Activated T-helper 1 cell treated with anti-CD3 and anti-CD28 coated beads, Interleukin-12 subunit alpha, Interleukin-12 subunit beta, Interleukin-2, Interleukin-4 antibody, amounts not matched to agents 30 ng/mL and 10 ng/mL and 1 ng/mL, durations not matched to agents 14 hours and 24 hours and 36 hours (primary cell): ENCODE measurements at regions of chr10 and their contacts with region 1.

Region 1: DNA sequence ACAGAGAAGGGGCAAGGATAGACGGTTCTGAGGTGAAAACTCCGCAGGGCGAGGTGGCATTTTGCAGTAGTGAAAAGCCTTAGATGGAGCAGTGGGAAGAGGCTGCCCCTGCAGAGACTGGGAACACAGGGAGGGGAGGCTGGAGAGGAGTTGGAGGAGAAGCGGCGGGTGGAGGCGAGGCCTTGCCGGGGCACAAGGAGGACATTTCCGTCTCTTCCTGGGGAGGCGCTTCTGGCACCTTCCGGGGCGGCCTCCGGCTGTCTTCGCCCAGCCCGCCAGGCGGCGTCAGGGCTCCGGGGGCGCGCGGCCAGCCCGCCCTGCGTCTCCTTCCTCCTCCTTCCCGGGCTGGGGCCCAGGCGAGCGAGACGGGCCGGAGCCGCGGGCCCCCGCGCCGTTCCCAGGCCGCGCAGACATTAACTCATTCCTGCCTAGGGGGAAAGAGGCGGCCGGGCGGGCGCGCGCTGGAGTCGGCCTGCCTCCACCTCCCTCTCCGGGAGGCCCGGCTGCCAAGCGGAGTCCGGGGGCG is 42.7 kb downstream of the LDB3 start:
- DNase-seq: peak; percentile 84
- H3K4me3 Mint-ChIP-seq: peak overlapping the region; percentile 88
- H3K27ac Mint-ChIP-seq: peak overlapping the region; percentile 97
- H3K4me1 Mint-ChIP-seq: peaks cover 17% of the 10 kb centered on the region
- H3K27me3 Mint-ChIP-seq: no peaks in the 10 kb centered on the region

Region 2: GRCh38 chr10:86521678-86522509 is 189.2 kb before region 1 on chr10 and contains the start of gene WAPL:
- intact Hi-C with region 1: loop called (anchors 2 kb)
- DNase-seq: peak; percentile 95
- H3K4me3 Mint-ChIP-seq: peak within 1 kb of the TSS; percentile 99
- H3K27ac Mint-ChIP-seq: peak within 1 kb of the TSS; percentile 98
- H3K4me1 Mint-ChIP-seq: peaks cover 68% of the 10 kb centered on the region
- H3K27me3 Mint-ChIP-seq: no peaks in the 10 kb centered on the region
- total RNA-seq, gene WAPL: 49.7 and 50.2 TPM in 2 replicates

Region 3: DNA sequence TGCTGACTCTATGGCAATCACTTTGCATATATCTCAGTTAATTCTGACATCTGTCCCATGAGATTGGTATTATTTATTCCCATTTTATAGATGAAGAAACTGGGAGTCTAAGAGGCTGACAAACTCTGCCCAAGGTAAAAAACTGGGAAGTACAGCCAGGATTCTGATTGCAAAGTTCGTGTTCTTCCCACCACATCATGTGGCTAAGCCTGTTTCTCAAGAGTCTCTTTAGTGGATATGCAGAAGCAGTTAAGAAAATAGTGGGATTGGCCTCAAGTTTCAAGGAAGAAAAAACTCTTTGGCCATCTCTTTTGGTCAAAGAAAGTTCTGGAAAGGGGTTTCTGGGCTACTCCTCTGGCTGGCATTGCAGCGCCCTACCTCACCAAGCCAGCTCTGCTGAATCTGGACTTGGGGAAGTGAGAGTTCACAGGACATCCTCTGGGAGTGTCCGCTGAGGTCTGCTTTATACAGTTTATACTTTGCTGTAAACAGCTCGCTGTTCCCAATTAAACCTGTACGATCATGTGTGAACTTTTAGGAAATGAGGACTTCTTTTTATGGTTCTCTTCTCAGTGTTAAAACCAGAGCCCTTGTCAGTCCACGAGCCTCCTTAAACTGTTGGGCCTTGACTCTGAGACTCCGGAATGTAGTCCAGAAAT is 33.1 kb after region 1 on chr10:
- intact Hi-C with region 1: no loop called
- DNase-seq: no peak
- H3K4me3 Mint-ChIP-seq: no peak overlapping the region
- H3K27ac Mint-ChIP-seq: no peak overlapping the region
- H3K4me1 Mint-ChIP-seq: no peaks in the 10 kb centered on the region
- H3K27me3 Mint-ChIP-seq: peaks cover 7% of the 10 kb centered on the region

Region 4: GRCh38 chr10:86755740-86756510 is 44.9 kb after region 1 on chr10:
- intact Hi-C with region 1: loop called (anchors 1 kb)
- DNase-seq: peak; percentile 86
- H3K4me3 Mint-ChIP-seq: peak overlapping the region; percentile 86
- H3K27ac Mint-ChIP-seq: peak overlapping the region; percentile 86
- H3K4me1 Mint-ChIP-seq: peaks cover 52% of the 10 kb centered on the region
- H3K27me3 Mint-ChIP-seq: peaks cover 38% of the 10 kb centered on the region

Region 5: GRCh38 chr10:86888585-86889381 is 177.7 kb after region 1 on chr10:
- intact Hi-C with region 1: loop called (anchors 2 kb)
- DNase-seq: no peak
- H3K4me3 Mint-ChIP-seq: no peak overlapping the region
- H3K27ac Mint-ChIP-seq: peak overlapping the region; percentile 64
- H3K4me1 Mint-ChIP-seq: peaks cover 9% of the 10 kb centered on the region
- H3K27me3 Mint-ChIP-seq: no peaks in the 10 kb centered on the region

Region 6: DNA sequence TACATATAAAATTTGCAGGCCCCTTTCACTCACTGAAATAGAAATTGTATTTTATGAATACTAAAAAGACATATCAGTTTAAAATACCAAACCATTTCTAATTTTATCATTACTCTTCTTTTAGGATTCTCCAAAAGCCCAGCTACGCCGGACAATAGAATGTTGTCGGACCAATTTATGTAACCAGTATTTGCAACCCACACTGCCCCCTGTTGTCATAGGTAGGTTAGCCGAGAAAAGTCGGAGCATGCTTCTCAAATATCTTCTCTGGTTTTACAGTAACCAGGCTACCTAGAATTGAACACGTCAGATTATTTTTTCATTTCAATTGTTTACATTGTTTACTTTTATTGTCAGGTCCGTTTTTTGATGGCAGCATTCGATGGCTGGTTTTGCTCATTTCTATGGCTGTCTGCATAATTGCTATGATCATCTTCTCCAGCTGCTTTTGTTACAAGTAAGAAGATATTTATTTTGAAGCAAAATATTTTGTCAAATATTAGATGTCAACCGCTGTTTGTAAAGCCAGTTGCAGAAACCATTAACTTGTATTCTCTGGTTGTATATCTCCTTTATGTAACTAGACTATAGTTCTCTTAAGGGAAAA is 188.7 kb after region 1 on chr10:
- intact Hi-C with region 1: loop called (anchors 1 kb)
- DNase-seq: peak; percentile 10
- H3K4me3 Mint-ChIP-seq: no peak overlapping the region
- H3K27ac Mint-ChIP-seq: no peak overlapping the region
- H3K4me1 Mint-ChIP-seq: no peaks in the 10 kb centered on the region
- H3K27me3 Mint-ChIP-seq: no peaks in the 10 kb centered on the region

Region 7: GRCh38 chr10:86971232-86971991 is 260.4 kb after region 1 on chr10:
- intact Hi-C with region 1: loop called (anchors 5 kb)
- DNase-seq: peak; percentile 76
- H3K4me3 Mint-ChIP-seq: peak overlapping the region; percentile 77
- H3K27ac Mint-ChIP-seq: peak overlapping the region; percentile 76
- H3K4me1 Mint-ChIP-seq: peaks cover 12% of the 10 kb centered on the region
- H3K27me3 Mint-ChIP-seq: peaks cover 35% of the 10 kb centered on the region